Left colon (tissue), 2 donors: ENCODE measurements at regions of chr16 and their contacts with region 1.

Region 1: GRCh38 chr16:15427648-15428239 is 6.6 kb upstream of the BMERB1 start:
- DNase-seq: peak; percentile 38 to 69
- ATAC-seq: peak; percentile 60

Region 2: GRCh38 chr16:15553313-15554088 is 125.8 kb after region 1 on chr16:
- intact Hi-C with region 1: loop called in 1 of 2 experiments (anchors 5 kb)
- DNase-seq: no peak
- ATAC-seq: no peak

Region 3: GRCh38 chr16:15822957-15823356 is 395.2 kb after region 1 on chr16:
- intact Hi-C with region 1: no loop called
- DNase-seq: peak in 1 of 2 donors; percentile 67
- ATAC-seq: peak; percentile 17